Activated CD4-positive, alpha-beta memory T cell treated with anti-CD3 and anti-CD28 coated beads for 36 hours (primary cell): ENCODE measurements at regions of chr6 and their contacts with region 1.

Region 1: GRCh38 chr6:87472525-87473418 is at the start of gene SLC35A1:
- DNase-seq: peak; percentile 88
- H3K4me3 Mint-ChIP-seq: peak within 1 kb of the TSS; percentile 98
- H3K27ac Mint-ChIP-seq: peak within 1 kb of the TSS; percentile 91
- H3K4me1 Mint-ChIP-seq: peaks cover 19% of the 10 kb centered on the region
- H3K27me3 Mint-ChIP-seq: peaks cover 3% of the 10 kb centered on the region
- total RNA-seq, gene SLC35A1: 7.8 to 9.5 TPM

Region 2: DNA sequence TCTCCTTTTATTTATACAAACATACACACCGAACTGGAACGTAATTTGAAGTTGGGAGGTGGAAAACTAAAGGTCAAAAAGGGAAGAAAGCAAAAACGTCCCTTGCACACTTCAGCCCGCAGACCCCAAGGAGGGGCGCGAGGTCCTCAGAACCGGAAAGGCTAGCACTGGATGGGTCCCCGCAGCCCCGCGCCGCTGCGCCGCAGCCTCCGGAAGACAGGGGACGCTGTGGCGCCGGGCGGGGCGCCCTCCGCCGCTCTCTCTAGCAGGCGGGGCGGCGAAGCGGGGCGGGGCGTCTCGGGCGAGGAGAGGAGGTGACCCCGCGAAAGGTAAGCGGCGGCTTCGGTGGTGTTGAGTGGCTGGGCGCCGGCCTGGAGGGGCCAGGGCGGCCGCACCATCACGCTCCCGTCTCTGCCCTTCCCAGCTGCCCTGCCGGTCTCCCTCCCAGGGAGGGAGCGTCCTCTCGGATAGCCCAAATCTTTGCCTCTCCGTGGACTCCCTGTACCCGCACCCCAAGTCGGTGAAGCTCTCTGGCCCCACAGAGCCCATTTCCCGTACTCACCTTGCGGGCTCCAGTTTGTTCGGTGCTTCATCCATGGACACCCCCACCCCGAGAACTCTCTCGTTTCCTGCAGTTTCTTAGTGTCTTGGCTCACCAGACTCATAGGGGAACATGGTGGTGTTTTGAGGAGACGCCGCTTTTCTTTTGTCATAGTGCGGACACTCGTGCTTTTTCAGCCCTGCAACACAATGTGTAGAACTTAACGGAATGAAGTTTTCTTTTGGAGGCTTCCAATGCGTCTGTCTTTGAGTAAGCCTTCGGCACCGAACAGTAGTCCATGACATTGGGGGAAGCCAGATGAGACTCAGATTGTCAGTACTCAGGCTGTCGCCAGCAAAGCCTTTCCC is 150.2 kb before region 1 on chr6 and contains the start of gene SMIM8:
- CTCF ChIA-PET with region 1: no interaction called
- POLR2A ChIA-PET with region 1: interaction called, 3 read pairs
- intact Hi-C with region 1: loop called (anchors 1 kb)
- DNase-seq: peak; percentile 90
- H3K4me3 Mint-ChIP-seq: peak within 1 kb of the TSS; percentile 98
- H3K27ac Mint-ChIP-seq: peak within 1 kb of the TSS; percentile 76
- H3K4me1 Mint-ChIP-seq: peaks cover 15% of the 10 kb centered on the region
- H3K27me3 Mint-ChIP-seq: no peaks in the 10 kb centered on the region
- total RNA-seq, gene SMIM8: 7.6 to 8.1 TPM

Region 3: GRCh38 chr6:87407901-87408720 is 64.7 kb before region 1 on chr6 and contains the start of gene CFAP206:
- CTCF ChIA-PET with region 1: interaction called, 3 read pairs
- POLR2A ChIA-PET with region 1: no interaction called
- intact Hi-C with region 1: loop called (anchors 1 kb)
- DNase-seq: peak; percentile 82
- H3K4me3 Mint-ChIP-seq: peak within 1 kb of the TSS; percentile 84
- H3K27ac Mint-ChIP-seq: peak within 1 kb of the TSS; percentile 64
- H3K4me1 Mint-ChIP-seq: peaks cover 4% of the 10 kb centered on the region
- H3K27me3 Mint-ChIP-seq: peaks cover 10% of the 10 kb centered on the region
- total RNA-seq, gene CFAP206: not detected

Region 4: DNA sequence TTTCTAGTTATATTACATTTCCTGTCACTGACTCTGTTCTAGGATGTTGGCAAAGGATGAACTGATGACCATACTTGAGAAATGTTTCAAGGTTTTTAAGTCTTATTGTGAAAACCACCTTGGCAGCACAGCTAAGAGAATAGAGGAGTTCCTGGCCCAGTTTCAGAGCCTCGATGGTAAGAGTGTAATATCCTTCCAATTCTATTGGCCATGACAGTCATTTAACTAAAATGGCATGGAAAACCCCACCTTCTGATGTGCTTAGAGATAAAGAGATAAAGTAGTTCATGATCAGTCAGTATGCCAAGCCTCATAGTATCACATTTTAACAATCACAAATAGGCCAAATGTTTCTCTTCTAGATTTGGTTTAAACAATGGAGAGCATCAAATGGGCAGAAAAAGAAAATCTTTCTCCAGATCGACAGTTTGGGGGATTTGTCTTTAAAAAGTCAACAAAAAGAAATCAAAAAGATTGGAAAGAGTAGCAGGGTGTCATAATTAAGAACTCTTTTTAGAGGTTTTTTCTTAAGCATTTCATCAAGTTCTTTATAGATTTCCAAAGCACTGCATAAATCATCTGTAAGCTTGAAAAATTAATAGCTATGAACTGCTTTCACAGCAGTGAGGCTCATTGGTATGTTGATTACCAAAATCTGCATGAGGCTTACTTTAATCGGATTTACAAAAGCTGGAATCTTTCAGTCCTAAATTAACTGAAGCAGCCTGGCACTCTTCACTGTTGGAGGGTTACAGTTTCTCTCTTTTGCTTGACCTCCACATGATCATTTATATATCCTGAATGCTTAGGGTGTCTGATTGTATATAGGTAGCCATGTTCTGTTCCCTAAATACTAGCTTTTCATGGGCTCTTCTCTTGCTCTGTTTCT is 180.5 kb after region 1 on chr6:
- CTCF ChIA-PET with region 1: interaction called, 3 read pairs
- POLR2A ChIA-PET with region 1: no interaction called
- intact Hi-C with region 1: loop called (anchors 5 kb)
- DNase-seq: peak; percentile 26
- H3K4me3 Mint-ChIP-seq: no peak overlapping the region
- H3K27ac Mint-ChIP-seq: peak overlapping the region; percentile 60
- H3K4me1 Mint-ChIP-seq: peaks cover 33% of the 10 kb centered on the region
- H3K27me3 Mint-ChIP-seq: no peaks in the 10 kb centered on the region

Region 5: DNA sequence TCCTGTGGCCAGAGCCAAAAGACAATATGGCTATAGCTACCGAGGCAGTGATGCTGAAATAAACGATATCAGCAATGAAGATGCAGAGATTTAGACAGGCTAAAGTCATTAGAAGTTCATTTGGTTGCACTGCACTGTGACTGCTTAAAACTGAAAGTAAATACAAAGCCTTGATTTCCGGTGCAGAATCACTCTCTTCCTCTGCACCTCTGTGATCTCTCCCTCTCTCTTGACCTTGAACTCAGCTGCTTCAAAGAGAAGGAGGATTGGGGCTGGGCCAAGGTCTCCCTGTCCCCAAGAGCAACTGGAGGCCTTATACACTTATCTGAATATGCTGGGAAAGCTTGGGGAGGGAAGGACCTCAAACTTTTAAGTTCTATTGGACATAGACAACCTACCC is 540.2 kb after region 1 on chr6:
- CTCF ChIA-PET with region 1: no interaction called
- POLR2A ChIA-PET with region 1: no interaction called
- intact Hi-C with region 1: no loop called
- DNase-seq: peak; percentile 19
- H3K4me3 Mint-ChIP-seq: no peak overlapping the region
- H3K27ac Mint-ChIP-seq: peak overlapping the region; percentile 73
- H3K4me1 Mint-ChIP-seq: peaks cover 17% of the 10 kb centered on the region
- H3K27me3 Mint-ChIP-seq: no peaks in the 10 kb centered on the region

Region 6: GRCh38 chr6:88870717-88871330 is 1398.1 kb after region 1 on chr6:
- CTCF ChIA-PET with region 1: no interaction called
- POLR2A ChIA-PET with region 1: no interaction called
- intact Hi-C with region 1: loop called (anchors 1 kb)
- DNase-seq: peak; percentile 17
- H3K4me3 Mint-ChIP-seq: no peak overlapping the region
- H3K27ac Mint-ChIP-seq: no peak overlapping the region
- H3K4me1 Mint-ChIP-seq: peaks cover 25% of the 10 kb centered on the region
- H3K27me3 Mint-ChIP-seq: no peaks in the 10 kb centered on the region